Panc1 (cell line): ENCODE measurements at regions of chr2 and their contacts with region 1.

Region 1: GRCh38 chr2:172813314-172813888 is 77.8 kb downstream of the RAPGEF4 start:
- DNase-seq: no peak
- ATAC-seq: peak; percentile 87
- H3K4me3 ChIP-seq: no peak overlapping the region
- H3K27ac ChIP-seq: no peak overlapping the region
- H3K4me1 ChIP-seq: no peaks in the 10 kb centered on the region
- H3K27me3 ChIP-seq: peaks cover 4% of the 10 kb centered on the region; the same call in 1 of the 2 replicates
- CTCF ChIP-seq: peak; percentile 69

Region 2: DNA sequence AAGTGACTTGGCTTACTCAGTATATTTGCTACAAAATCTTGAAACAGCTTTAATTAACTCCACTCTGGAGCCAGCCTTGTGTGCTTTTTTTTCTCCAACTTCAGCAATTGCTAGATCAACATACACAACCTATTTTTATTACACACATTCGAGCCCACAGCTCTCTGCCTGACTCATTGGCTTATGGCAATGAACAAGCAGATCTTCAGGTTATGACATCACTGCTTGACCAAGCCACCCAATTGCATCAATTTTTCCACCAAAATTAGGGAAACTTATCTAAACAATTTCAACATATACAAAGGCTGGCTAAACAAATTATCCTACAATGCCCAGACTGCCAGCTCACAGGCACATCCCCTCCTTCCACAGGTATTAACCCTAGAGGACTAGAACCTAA is 297.1 kb before region 1 on chr2:
- CTCF ChIA-PET with region 1: no interaction called
- POLR2A ChIA-PET with region 1: no interaction called
- in situ Hi-C with region 1: no loop called
- intact Hi-C with region 1: no loop called
- DNase-seq: no peak
- ATAC-seq: no peak
- H3K4me3 ChIP-seq: no peak overlapping the region
- H3K27ac ChIP-seq: no peak overlapping the region
- H3K4me1 ChIP-seq: no peaks in the 10 kb centered on the region
- H3K27me3 ChIP-seq: no peaks in the 10 kb centered on the region
- CTCF ChIP-seq: no peak

Region 3: DNA sequence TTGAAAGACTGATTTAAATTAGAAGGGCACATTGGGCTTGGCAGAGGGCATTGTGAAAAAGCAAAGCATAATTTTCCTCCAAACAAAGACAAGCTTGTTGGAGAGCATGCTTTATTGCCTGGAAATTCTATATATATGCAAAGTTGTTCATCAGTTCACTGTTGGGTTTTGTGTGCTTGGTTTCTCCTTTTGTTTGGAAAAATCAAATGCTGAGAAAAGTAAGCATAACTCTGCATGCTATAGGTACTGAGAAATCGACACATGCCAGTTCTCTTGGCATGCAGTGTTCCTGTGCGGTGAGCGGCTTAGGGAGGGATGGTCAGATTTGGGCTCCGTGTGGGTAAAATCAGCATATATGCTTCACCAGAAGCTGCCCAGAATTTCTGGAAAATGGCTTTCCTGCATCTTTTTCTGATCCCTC is 83.3 kb after region 1 on chr2:
- CTCF ChIA-PET with region 1: interaction called, 17 read pairs
- POLR2A ChIA-PET with region 1: no interaction called
- in situ Hi-C with region 1: loop called (anchors 25 kb)
- intact Hi-C with region 1: no loop called
- DNase-seq: no peak
- ATAC-seq: no peak
- H3K4me3 ChIP-seq: no peak overlapping the region
- H3K27ac ChIP-seq: no peak overlapping the region
- H3K4me1 ChIP-seq: no peaks in the 10 kb centered on the region
- H3K27me3 ChIP-seq: peaks cover 45% of the 10 kb centered on the region
- CTCF ChIP-seq: no peak

Region 4: GRCh38 chr2:172931918-172932520 is 118.6 kb after region 1 on chr2:
- CTCF ChIA-PET with region 1: interaction called, 10 read pairs
- POLR2A ChIA-PET with region 1: interaction called, 5 read pairs
- in situ Hi-C with region 1: no loop called
- intact Hi-C with region 1: no loop called
- DNase-seq: peak; percentile 20
- ATAC-seq: peak; percentile 78
- H3K4me3 ChIP-seq: no peak overlapping the region
- H3K27ac ChIP-seq: no peak overlapping the region
- H3K4me1 ChIP-seq: peaks cover 4% of the 10 kb centered on the region; the same call in 1 of the 2 replicates
- H3K27me3 ChIP-seq: no peaks in the 10 kb centered on the region; the same call in 1 of the 2 replicates
- CTCF ChIP-seq: peak; percentile 86